AG04449 (cell line): ENCODE measurements at regions of chr16 and their contacts with region 1.

Region 1: DNA sequence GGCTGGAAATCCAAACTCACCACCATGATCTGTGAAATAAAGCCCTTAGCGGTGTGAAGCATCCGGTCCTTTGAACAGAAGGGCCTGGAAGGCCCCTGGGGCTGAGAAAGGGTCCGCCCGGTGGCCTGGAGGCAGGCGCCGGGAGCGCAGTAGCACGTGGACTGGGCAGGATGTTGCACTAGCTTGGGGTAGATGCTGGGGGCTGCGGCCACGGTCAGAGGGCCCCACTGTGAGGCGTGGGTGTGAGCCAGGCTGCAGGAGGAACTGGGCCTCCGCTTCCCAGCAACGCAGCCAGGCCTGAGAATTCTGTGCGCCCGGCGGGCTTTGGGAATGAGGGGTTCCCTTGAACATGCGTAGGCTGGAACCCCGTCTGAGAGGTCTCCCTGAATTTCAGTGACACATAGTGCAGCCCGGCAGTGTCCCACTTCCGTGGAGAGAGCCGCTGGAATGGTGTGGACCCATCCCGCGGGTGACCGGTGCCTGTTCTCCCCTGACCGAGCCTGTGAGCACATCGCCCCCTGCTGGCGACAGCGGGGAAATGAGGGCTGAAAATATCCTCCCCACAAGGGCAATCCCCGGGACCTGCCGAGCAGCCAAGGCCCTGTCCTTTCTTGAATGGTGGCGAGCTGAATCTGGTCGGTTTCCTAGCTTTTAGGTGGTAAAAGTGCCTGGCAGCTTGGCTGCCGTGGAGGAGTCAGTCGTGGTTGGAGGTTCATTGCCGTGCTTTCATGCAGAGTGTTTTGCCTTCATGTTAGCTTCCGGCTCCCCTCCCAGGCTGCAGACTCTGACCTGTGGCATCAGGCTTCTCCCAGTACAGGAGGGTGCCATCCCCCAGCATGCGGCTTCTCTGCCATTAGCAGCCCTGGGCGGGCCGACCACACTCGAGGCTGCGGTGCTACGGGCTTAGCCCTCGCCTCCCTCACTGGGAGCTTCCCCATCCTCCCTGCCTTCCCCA is 43.8 kb downstream of the DNAJA2 start:
- DNase-seq: no peak
- H3K4me3 ChIP-seq: no peak overlapping the region
- CTCF ChIP-seq: peak; percentile 87

Region 2: GRCh38 chr16:46673320-46674013 is 256.2 kb before region 1 on chr16:
- CTCF ChIA-PET with region 1: interaction called, 13 read pairs
- POLR2A ChIA-PET with region 1: no interaction called
- DNase-seq: no peak
- H3K4me3 ChIP-seq: no peak overlapping the region
- CTCF ChIP-seq: peak; percentile 82

Region 3: GRCh38 chr16:46853713-46854443 is 75.8 kb before region 1 on chr16:
- CTCF ChIA-PET with region 1: interaction called, 91 read pairs
- POLR2A ChIA-PET with region 1: no interaction called
- DNase-seq: no peak
- H3K4me3 ChIP-seq: no peak overlapping the region
- CTCF ChIP-seq: peak; percentile 84

Region 4: DNA sequence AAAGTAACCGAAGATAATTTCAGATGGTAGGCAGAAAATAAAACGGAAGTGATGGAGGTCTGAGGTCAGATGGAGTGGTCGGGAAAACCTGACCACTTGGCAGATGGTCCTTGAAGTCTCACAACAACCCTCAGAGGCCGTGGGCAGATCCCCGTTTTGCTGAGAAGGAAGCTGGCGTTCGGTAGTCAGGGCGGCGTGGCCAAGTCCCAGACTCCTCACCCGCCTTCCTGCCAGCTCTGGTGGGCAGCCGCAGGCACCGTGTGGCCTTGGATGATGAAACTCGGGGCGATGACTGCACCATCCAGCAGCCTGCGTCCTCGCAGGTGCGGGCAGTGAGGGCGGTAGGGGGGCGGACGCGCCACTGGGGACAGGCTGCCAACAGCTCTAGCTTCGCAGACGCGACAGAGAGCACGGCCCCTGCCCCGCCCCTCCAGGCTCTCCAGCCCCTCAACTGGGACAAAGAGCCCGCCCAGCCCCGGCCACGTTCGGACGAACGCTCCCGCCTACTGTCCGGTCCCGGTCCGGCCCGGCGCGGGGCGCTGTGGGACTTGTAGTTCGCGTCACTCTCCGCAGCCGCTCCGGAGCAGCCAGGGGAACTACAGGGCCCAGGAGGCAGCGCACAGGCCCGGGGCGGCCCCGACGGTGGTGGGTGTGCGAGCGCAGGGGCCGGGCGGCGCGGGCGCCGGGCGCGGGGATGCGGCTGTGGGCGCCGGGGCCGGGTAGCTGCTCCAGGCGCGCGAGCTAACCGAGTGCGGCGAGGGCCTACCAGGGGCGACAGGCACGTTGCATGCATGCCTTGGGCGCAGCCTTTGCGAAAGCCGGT is 45.8 kb before region 1 on chr16 and contains the start of gene GPT2:
- CTCF ChIA-PET with region 1: interaction called, 10 read pairs
- POLR2A ChIA-PET with region 1: no interaction called
- DNase-seq: peak; percentile 59
- H3K4me3 ChIP-seq: peak within 1 kb of the TSS; percentile 94
- CTCF ChIP-seq: peak; percentile 13

Region 5: DNA sequence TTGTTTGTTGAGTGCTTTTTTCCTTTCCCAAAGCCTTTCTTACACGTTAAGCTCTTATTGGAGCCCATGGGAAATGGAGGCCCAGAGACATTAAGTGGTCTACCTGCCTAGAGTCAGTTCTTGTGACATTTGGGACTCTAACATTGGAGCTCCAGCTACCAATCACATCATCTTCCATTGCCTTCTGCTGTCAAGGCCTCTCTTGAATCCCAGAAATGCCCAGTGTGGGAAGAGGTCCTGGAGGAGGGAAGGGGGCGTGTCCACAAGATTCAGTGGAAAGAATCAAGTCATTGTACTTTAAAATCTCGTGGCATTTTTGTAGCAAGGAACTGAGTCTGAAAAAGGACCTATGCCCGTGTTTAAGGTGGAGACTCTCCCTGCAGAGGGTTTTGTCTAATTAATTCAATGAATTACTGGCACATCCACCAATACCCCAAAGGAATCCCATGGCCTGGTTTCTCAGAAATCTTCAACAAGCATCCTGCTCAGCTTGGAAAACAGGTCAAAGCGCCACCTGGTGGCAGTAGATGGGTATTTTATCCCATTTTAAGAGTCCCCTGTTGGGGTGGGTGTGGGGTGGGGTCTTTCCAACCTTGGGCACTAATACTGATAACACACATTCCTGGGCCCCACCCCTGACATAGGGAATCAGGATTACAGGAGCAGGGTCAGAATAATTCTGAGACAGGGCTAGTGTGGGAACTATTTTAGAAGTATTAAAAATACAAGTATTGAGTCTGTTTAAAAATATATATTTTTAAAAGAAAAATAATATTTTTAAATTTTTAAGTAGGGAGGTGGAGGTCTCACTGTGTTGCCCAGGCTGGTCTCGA is 20.9 kb before region 1 on chr16:
- CTCF ChIA-PET with region 1: interaction called, 16 read pairs
- POLR2A ChIA-PET with region 1: no interaction called
- DNase-seq: peak; percentile 5
- H3K4me3 ChIP-seq: no peak overlapping the region
- CTCF ChIP-seq: peak; percentile 58

Region 6: DNA sequence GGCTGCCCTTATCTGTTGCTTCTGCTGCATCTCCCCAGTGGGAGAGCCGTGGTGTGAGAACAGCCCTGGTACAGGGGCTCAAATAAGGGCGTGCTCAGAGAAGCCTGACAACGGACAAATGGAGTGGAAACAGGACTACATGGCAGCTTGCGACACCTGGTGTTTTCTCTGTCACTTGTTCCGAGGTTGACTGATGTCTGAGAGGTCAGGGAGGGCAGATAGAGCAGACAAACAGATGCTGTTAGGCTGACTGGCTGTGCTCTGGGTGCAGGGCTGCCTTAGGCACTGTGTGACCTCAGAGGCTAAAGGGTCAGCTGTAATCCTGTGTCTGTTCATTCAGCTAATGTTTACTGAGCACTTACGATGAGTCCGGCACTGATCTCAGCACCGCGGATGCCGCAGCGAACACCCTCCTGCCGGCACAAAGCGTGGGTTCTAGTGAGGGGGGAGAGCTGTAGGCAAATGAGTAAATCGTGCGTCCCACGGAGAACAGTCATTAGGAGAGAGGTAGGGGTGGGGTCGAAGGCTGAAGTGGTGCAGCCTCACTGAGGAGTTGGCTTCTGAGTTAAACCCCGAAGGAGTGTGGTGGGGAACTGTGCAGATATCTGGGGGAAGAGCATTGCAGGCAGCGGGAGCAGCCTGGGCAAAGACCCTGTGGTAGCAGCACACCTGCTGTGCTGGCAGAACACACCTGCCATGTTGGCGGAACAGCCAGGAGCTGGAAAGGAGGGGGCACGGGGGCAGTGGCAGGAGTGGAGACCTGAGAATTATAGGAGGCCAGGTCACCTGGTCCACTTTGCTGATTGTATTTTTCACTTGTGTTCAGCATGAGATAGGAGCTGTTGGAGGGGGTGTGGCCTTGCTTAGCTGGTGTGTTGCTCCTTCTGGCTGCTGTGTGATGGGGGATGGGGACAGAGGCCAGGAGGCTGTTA is 10.5 kb before region 1 on chr16:
- CTCF ChIA-PET with region 1: interaction called, 77 read pairs
- POLR2A ChIA-PET with region 1: no interaction called
- DNase-seq: no peak
- H3K4me3 ChIP-seq: no peak overlapping the region
- CTCF ChIP-seq: no peak

Region 7: GRCh38 chr16:46947900-46948547 is 18.4 kb after region 1 on chr16:
- CTCF ChIA-PET with region 1: interaction called, 19 read pairs
- POLR2A ChIA-PET with region 1: no interaction called
- DNase-seq: no peak
- H3K4me3 ChIP-seq: no peak overlapping the region
- CTCF ChIP-seq: peak; percentile 47